ENCODE measurements at regions of chr9 and their contacts with region 1.

Region 1: GRCh38 chr9:70111042-70111602 is 67.5 kb downstream of the MAMDC2 start:
- DNase-seq: peak; percentile 39
- CTCF ChIP-seq: peak; percentile 94

Region 2: GRCh38 chr9:69971643-69972449 is 139.3 kb before region 1 on chr9:
- CTCF ChIA-PET with region 1: interaction called, 168 read pairs
- POLR2A ChIA-PET with region 1: no interaction called
- DNase-seq: peak; percentile 63
- CTCF ChIP-seq: peak; percentile 84

Region 3: DNA sequence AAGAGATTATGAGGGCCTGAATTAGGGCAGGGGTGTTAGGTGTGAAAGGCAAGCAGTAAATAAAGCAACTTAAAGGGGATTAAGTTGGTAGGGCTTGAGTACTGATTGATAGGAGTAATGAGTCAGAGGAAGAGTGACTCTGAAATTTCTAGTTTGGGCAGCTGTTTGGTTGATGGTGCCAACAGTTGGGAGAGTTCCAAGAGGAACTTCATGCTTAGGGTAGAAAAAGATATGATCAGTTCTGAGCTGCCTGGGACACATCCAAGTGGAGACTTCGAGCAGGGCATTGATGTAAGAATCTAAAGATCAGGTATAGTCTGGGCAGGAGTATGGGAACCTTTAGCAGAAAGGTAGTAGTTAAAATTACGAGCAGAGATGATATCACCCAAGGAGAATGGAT is 57.3 kb before region 1 on chr9:
- CTCF ChIA-PET with region 1: interaction called, 10 read pairs
- POLR2A ChIA-PET with region 1: no interaction called
- DNase-seq: no peak
- CTCF ChIP-seq: no peak

Region 4: GRCh38 chr9:70080481-70081119 is 30.5 kb before region 1 on chr9:
- CTCF ChIA-PET with region 1: interaction called, 51 read pairs
- POLR2A ChIA-PET with region 1: no interaction called
- DNase-seq: no peak
- CTCF ChIP-seq: no peak

Region 5: GRCh38 chr9:70136632-70137031 is 25.5 kb after region 1 on chr9:
- CTCF ChIA-PET with region 1: interaction called, 90 read pairs
- POLR2A ChIA-PET with region 1: no interaction called
- DNase-seq: no peak
- CTCF ChIP-seq: no peak

Region 6: GRCh38 chr9:70297141-70297540 is 186.0 kb after region 1 on chr9:
- CTCF ChIA-PET with region 1: no interaction called
- POLR2A ChIA-PET with region 1: no interaction called
- DNase-seq: no peak
- CTCF ChIP-seq: no peak

Measured in GM10248 (cell line).